OCI-LY7 (cell line): ENCODE measurements at regions of chr9 and their contacts with region 1.

Region 1: GRCh38 chr9:133658442-133659431 is 22.6 kb downstream of the DBH start:
- DNase-seq: no peak
- H3K4me3 ChIP-seq: no peak overlapping the region
- H3K27ac ChIP-seq: no peak overlapping the region
- H3K4me1 ChIP-seq: peaks cover 7% of the 10 kb centered on the region
- CTCF ChIP-seq: no peak

Region 2: GRCh38 chr9:133715866-133716563 is 57.3 kb after region 1 on chr9:
- CTCF ChIA-PET with region 1: no interaction called
- POLR2A ChIA-PET with region 1: no interaction called
- intact Hi-C with region 1: loop called (anchors 5 kb)
- DNase-seq: peak; percentile 75
- H3K4me3 ChIP-seq: no peak overlapping the region
- H3K27ac ChIP-seq: no peak overlapping the region
- H3K4me1 ChIP-seq: peaks cover 19% of the 10 kb centered on the region
- CTCF ChIP-seq: peak; percentile 94